Thyroid gland (tissue), 4 donors: ENCODE measurements at regions of chr3 and their contacts with region 1.

Region 1: DNA sequence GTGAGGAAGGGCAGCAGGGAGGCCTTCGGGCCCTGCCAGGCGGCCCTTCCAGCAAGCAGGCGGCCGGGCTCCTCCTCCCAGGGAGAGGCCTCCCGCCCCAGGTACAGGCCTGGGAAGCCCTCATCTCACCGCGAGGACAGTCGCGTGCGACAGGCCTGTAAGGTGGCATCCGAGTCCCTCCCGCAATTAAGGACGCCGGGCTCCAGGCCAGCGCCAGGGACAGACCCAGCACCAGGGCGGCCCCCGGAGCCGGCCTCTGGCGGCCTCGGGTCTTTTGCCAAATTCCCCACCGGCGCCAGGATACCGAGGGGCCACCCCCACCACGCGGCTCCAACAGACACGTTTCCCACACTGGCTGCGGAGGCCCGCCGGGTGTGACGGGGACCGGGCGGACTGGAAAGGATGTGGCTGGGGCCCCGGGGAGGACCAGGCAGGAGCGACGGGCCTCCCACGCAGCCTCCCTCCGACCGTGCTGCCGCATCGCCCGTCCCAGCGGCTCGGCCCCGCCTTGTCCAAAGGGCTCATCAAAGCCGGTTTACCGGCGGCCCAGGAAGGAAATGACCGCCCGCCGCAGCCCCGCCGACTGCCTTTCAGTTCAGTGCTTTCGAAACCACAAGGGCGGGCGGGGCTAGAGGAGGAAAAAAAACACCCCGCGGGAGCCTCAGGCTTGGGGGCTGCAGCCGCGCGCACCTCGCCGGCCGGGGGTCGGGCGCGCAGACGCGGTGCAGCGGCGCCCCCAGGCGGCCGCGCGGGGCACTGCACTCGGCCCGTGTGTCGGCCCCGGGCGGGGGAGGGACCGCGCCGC is 11.3 kb downstream of the XXYLT1 start:
- DNase-seq: peak; percentile 84 to 86
- H3K4me3 ChIP-seq: peak overlapping the region in 2 of 3 donors; percentile 27 to 57
- H3K27ac ChIP-seq: peak overlapping the region; percentile 68 to 87 (median 72)
- H3K4me1 ChIP-seq: peaks cover 6 to 19% of the 10 kb centered on the region in 2 donors
- H3K27me3 ChIP-seq: no peaks in the 10 kb centered on the region
- CTCF ChIP-seq: peak; percentile 5 to 100 (median 67)
- POLR2A ChIP-seq: peak in 1 of 2 donors; percentile 51

Region 2: DNA sequence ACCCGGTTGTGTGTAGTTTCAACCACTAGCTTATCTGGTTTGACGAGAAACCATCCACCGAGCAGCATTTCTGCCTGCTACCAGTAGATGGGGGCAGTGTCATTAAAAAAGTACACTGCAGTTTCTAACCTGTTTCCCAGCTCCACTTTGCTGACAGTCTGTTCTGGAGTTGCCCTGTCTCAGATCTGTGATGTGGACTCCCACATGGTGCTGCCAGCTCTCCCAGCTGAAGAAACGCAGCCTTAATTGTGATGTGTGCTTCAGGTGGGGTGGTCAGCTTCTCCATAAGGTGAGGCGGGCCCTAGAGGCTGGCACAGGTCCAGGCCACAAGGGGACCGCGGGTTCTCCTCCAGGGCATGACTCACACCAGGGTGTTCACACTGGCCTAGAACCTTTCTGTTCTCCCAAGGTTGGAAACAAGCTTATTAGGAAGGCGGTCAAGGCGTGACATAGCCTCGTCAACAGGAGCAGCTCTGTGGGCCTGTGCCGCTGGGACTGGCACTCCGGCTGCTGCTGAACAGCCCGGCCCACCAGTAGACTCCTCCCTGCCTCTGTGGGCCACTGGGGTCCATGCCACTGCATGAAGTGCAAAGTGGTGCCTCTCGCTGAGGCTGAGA is 576.9 kb before region 1 on chr3:
- intact Hi-C with region 1: loop called (anchors 5 kb)
- DNase-seq: peak; percentile 81 to 84
- H3K4me3 ChIP-seq: no peak overlapping the region
- H3K27ac ChIP-seq: no peak overlapping the region
- H3K4me1 ChIP-seq: peaks cover 14 to 26% of the 10 kb centered on the region in 2 donors
- H3K27me3 ChIP-seq: no peaks in the 10 kb centered on the region
- CTCF ChIP-seq: peak; percentile 75 to 99 (median 87)
- POLR2A ChIP-seq: no peak

Region 3: DNA sequence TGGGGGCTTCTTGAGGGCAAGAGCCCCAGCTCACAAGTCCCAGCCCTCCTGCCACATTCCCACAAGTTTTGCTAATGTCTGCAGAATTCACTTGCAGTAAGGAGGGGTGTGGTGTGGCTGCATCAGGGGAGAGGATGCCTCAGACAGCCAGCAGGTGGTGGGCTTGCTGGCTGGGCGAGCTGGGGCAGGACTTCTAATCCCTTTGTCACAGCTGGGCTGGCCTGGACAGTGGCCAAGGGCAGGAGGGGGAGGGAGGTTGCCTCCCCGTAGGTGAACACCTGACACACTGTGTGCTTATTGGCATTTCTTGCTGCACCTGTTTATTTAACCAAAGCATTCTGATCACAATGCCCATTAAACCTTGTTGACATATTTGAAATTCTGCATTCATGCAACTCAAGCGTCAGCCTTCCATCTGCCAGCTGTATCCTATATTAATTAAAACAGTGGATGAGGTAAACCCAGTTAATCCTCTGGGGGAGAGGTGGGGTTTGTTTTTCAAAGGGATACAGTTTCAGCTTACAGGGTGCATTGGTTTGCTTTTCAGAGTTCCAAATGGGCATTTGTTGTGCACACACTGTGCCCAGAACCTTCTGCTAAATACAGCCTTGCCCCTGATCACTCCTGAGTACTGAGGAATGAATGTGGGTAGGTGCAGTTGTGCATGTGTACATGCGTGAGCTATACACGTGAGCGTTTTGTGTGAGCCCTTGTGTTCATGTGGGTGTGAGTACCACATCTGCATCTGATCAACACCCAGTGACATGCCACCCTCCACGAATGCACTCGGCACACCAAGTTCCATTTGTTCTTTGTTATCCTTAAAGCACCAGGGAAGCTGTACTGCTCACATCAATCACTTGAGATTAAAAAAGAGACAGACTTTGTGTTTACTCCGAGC is 257.5 kb before region 1 on chr3:
- intact Hi-C with region 1: loop called (anchors 10 kb)
- DNase-seq: peak; percentile 86 to 93
- H3K4me3 ChIP-seq: no peak overlapping the region
- H3K27ac ChIP-seq: peak overlapping the region in 2 of 3 donors; percentile 2 to 14
- H3K4me1 ChIP-seq: peaks cover 22 to 31% of the 10 kb centered on the region in 2 donors
- H3K27me3 ChIP-seq: no peaks in the 10 kb centered on the region
- CTCF ChIP-seq: peak; percentile 46 to 79 (median 70)
- POLR2A ChIP-seq: no peak

Region 4: DNA sequence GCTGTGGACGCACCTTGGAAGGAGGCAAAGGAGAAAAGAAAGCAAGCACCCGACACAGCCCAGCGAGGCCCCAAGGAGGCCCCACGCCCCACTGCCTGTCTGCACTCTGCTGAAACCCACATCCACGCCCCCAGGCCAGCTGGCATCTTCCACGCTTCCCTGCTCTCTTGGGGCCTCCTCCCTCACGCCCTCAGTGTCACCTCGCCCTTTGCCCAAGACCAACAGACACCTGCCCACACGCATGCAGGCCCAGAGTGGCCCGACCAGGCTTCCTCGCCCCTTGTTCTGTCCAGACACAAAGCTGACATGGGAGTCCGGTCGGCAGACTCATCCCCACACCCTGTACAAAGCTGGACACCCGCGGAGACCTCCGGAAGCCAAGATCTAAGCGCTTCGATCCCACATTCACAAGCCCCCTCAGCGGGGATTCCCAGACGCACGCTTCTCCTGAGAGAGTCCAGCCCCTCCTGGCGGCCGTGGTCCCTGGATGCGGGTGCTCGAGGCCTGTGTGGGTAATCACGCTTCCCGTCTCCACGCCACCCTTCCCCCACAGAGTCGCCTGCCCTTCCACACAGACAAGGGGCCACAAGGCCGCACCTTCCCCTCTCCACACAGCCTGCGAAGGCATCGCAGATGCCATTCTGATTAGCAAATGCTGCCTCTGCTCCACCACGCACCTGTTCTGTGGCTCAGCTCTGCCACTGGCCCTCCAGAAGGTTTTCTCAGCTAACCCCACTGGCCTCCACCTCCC is 165.3 kb before region 1 on chr3:
- intact Hi-C with region 1: no loop called
- DNase-seq: peak; percentile 85 to 89
- H3K4me3 ChIP-seq: no peak overlapping the region
- H3K27ac ChIP-seq: peak overlapping the region in 2 of 3 donors; percentile 24 to 63
- H3K4me1 ChIP-seq: peaks cover 0 to 8% of the 10 kb centered on the region in 2 donors
- H3K27me3 ChIP-seq: no peaks in the 10 kb centered on the region
- CTCF ChIP-seq: peak in 1 of 6 experiments; percentile 5
- POLR2A ChIP-seq: no peak

Region 5: GRCh38 chr3:195117978-195118581 is 141.6 kb before region 1 on chr3:
- intact Hi-C with region 1: loop called (anchors 10 kb)
- DNase-seq: no peak
- H3K4me3 ChIP-seq: no peak overlapping the region
- H3K27ac ChIP-seq: no peak overlapping the region
- H3K4me1 ChIP-seq: peaks cover 0 to 8% of the 10 kb centered on the region in 2 donors
- H3K27me3 ChIP-seq: no peaks in the 10 kb centered on the region
- CTCF ChIP-seq: no peak
- POLR2A ChIP-seq: no peak

Region 6: DNA sequence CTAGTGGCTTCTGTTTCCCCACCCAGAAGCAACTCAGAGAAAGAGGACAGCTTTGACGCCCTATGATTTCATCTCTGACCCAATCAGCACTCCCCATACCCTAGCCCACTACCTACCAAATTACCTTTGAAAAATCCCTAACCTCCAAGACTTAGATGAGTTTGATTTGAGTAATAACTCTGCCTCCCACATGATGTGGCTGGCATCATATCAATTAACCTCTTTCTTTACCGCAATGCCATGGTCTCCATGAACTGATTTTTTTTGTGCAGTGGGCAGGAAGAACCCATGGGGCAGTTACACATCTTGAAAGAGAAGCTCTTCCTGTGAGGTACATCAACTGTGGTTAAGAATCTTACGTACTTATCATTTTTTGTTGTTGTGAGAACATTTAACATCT is 349.6 kb after region 1 on chr3:
- intact Hi-C with region 1: no loop called
- DNase-seq: no peak
- H3K4me3 ChIP-seq: no peak overlapping the region
- H3K27ac ChIP-seq: no peak overlapping the region
- H3K4me1 ChIP-seq: peaks cover 0 to 1% of the 10 kb centered on the region in 2 donors
- H3K27me3 ChIP-seq: no peaks in the 10 kb centered on the region
- CTCF ChIP-seq: no peak
- POLR2A ChIP-seq: no peak